Activated CD4-positive, alpha-beta T cell treated with anti-CD3 and anti-CD28 coated beads for 36 hours (primary cell): ENCODE measurements at regions of chr11 and their contacts with region 1.

Region 1: DNA sequence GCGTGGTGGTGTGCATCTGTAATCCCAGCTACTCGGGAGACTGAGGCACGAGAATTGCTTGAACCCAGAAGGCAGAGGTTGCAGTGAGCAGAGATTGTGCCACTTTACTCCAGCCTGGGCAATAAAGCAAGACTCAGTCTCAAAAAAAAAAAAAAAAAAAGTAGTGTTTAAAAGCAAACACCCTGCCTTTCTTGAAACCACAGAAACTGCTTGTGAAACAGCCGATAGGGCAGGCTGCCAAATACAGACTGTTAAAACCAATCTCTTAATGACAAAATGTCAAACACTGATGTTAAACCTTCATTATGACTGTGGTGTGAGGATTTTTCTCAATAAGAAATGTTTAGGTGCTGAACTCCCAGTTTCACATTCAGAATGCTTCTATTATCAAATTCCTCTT is 27.3 kb downstream of the MARK2 start:
- DNase-seq: peak; percentile 92
- ATAC-seq: peak; percentile 81
- H3K4me3 Mint-ChIP-seq: peak overlapping the region; percentile 28
- H3K27ac Mint-ChIP-seq: peak overlapping the region; percentile 62
- H3K4me1 Mint-ChIP-seq: peaks cover 79% of the 10 kb centered on the region
- H3K27me3 Mint-ChIP-seq: no peaks in the 10 kb centered on the region

Region 2: DNA sequence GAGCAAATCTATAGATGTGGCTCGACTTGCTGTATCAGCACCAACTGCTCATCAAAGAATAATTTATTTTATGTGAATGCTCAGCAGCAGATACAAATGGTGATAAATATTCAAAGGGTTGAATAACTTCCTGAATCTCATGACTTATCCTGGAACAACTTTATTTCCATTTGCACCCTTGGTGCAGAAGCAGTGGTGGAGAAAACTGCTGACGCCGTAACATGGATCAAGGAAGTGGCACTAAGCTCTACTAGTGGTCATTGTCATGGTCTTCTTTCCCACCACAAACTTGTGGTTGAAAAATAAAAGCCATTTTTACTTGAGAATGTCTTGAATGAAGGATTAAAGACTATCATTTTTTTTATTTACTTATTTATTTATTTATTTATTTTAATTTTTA is 12.7 kb before region 1 on chr11:
- CTCF ChIA-PET with region 1: interaction called, 5 read pairs
- POLR2A ChIA-PET with region 1: interaction called, 4 read pairs
- intact Hi-C with region 1: loop called in 1 of 2 experiments (anchors 2 kb)
- DNase-seq: no peak
- ATAC-seq: no peak
- H3K4me3 Mint-ChIP-seq: no peak overlapping the region
- H3K27ac Mint-ChIP-seq: no peak overlapping the region
- H3K4me1 Mint-ChIP-seq: peaks cover 62% of the 10 kb centered on the region
- H3K27me3 Mint-ChIP-seq: no peaks in the 10 kb centered on the region